ENCODE measurements at regions of chr4 and their contacts with region 1.

Region 1: DNA sequence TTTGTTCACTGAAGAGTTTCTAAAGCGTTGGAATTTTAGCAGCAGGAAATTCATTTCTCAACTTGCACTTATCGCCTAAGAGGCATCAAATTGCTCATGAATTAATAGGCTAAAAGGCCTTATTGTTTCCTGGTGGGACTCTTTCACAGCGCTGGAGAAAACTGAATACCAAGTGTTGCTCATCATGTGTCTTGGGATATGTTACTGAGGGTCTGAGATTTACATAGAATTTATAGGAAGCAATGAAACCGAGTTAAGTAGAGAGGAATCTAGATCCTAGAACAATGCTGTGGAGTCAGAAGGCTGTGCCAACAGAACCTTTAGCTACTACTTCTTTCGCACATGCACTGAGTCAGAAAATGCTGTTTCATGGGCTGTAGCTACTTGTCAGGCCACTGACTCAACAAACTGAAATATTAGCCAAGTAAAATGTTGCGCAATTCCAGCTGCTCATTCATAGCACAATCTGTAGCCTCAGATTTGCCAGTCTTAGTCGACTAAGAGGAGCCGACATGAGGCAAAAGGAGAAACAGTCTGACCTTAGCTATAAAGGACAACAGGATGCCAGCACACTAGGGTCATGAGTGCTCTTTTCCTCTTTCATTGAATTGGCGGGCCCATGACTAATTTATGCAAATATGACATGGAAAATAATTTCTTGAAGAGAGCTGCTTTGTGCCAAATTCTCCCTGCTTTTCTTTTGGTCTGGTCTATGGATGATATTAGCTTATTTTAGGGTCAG is 35.9 kb upstream of the CXCL8 start:
- DNase-seq: peak; percentile 100
- ATAC-seq: peak; percentile 77
- H3K4me3 ChIP-seq: no peak overlapping the region
- H3K27ac ChIP-seq: peak overlapping the region; percentile 36
- H3K4me1 ChIP-seq: peaks cover 20% of the 10 kb centered on the region
- H3K27me3 ChIP-seq: no peaks in the 10 kb centered on the region
- CTCF ChIP-seq: no peak
- POLR2A ChIP-seq: peak; percentile 81
- RAD21 ChIP-seq: no peak

Region 2: GRCh38 chr4:73741031-73741749 is 36.7 kb after region 1 on chr4:
- CTCF ChIA-PET with region 1: no interaction called
- POLR2A ChIA-PET with region 1: no interaction called
- dilution Hi-C with region 1: no loop called
- in situ Hi-C with region 1: no loop called
- intact Hi-C with region 1: no loop called
- DNase-seq: peak; percentile 29
- ATAC-seq: no peak
- H3K4me3 ChIP-seq: no peak overlapping the region
- H3K27ac ChIP-seq: no peak overlapping the region
- H3K4me1 ChIP-seq: no peaks in the 10 kb centered on the region
- H3K27me3 ChIP-seq: no peaks in the 10 kb centered on the region
- CTCF ChIP-seq: no peak
- POLR2A ChIP-seq: no peak
- RAD21 ChIP-seq: no peak

Region 3: GRCh38 chr4:73917081-73917501 is 212.6 kb after region 1 on chr4:
- CTCF ChIA-PET with region 1: no interaction called
- POLR2A ChIA-PET with region 1: no interaction called
- dilution Hi-C with region 1: no loop called
- in situ Hi-C with region 1: no loop called
- intact Hi-C with region 1: loop called (anchors 1 kb)
- DNase-seq: peak; percentile 96
- ATAC-seq: peak; percentile 94
- H3K4me3 ChIP-seq: no peak overlapping the region
- H3K27ac ChIP-seq: no peak overlapping the region; the same call in 1 of the 2 replicates
- H3K4me1 ChIP-seq: peaks cover 17% of the 10 kb centered on the region
- H3K27me3 ChIP-seq: peaks cover 24% of the 10 kb centered on the region
- CTCF ChIP-seq: no peak
- POLR2A ChIP-seq: no peak
- RAD21 ChIP-seq: no peak

Region 4: DNA sequence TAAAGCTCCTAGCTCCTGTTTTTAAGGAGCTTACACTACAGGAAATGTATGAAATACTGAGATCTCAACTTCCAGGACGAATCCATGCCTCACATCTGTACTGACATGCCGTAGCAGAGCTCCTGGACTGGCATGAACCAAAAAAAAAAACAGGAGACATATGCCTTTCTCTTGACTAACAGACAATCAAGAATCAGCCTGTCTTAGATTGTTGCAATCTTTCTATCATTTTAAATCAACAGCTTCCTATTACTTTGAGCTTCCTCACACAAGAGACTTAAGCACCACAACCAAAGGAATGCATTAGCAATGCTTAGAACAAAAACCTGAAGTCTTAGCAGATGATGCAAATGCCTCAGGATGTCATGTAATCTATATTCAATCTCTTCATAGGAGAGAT is 705.8 kb after region 1 on chr4:
- CTCF ChIA-PET with region 1: no interaction called
- POLR2A ChIA-PET with region 1: no interaction called
- dilution Hi-C with region 1: no loop called
- in situ Hi-C with region 1: no loop called
- intact Hi-C with region 1: loop called (anchors 5 kb)
- DNase-seq: peak; percentile 51
- ATAC-seq: no peak
- H3K4me3 ChIP-seq: no peak overlapping the region
- H3K27ac ChIP-seq: no peak overlapping the region
- H3K4me1 ChIP-seq: no peaks in the 10 kb centered on the region
- H3K27me3 ChIP-seq: no peaks in the 10 kb centered on the region
- CTCF ChIP-seq: no peak
- POLR2A ChIP-seq: no peak
- RAD21 ChIP-seq: no peak

Region 5: GRCh38 chr4:74632634-74633033 is 928.1 kb after region 1 on chr4:
- CTCF ChIA-PET with region 1: no interaction called
- POLR2A ChIA-PET with region 1: no interaction called
- dilution Hi-C with region 1: no loop called
- in situ Hi-C with region 1: loop called (anchors 25 kb)
- intact Hi-C with region 1: no loop called
- DNase-seq: peak; percentile 88
- ATAC-seq: peak; percentile 70
- H3K4me3 ChIP-seq: no peak overlapping the region
- H3K27ac ChIP-seq: no peak overlapping the region
- H3K4me1 ChIP-seq: no peaks in the 10 kb centered on the region
- H3K27me3 ChIP-seq: peaks cover 11% of the 10 kb centered on the region
- CTCF ChIP-seq: no peak
- POLR2A ChIP-seq: no peak
- RAD21 ChIP-seq: no peak

Measured in IMR-90 (cell line).